Heart right ventricle (tissue), 16 donors: ENCODE measurements at regions of chr22 and their contacts with region 1.

Region 1: GRCh38 chr22:39236321-39237317 is 8.2 kb downstream of the PDGFB start:
- DNase-seq: peak; percentile 69 to 90
- ATAC-seq: peak; percentile 16 to 65 (median 45)
- H3K4me3 ChIP-seq: peak overlapping the region in 6 of 10 donors; percentile 15 to 38 (median 24)
- H3K27ac ChIP-seq: peak overlapping the region; percentile 81 to 98 (median 92)
- H3K4me1 ChIP-seq: peaks cover 35 to 98% (median 94%) of the 10 kb centered on the region in 9 donors
- H3K27me3 ChIP-seq: peaks cover 0 to 90% (median 0%) of the 10 kb centered on the region in 7 donors
- CTCF ChIP-seq: no peak

Region 2: GRCh38 chr22:39170825-39171622 is 65.6 kb before region 1 on chr22:
- intact Hi-C with region 1: loop called in 8 of 10 experiments (anchors 2 to 10 kb)
- DNase-seq: peak; percentile 83 to 89
- ATAC-seq: peak; percentile 70 to 86 (median 82)
- H3K4me3 ChIP-seq: peak overlapping the region in 3 of 10 donors; percentile 10 to 23 (median 18)
- H3K27ac ChIP-seq: peak overlapping the region in 6 of 10 donors; percentile 0 to 92 (median 27)
- H3K4me1 ChIP-seq: peaks cover 32 to 57% (median 53%) of the 10 kb centered on the region in 9 donors
- H3K27me3 ChIP-seq: no peaks in the 10 kb centered on the region
- CTCF ChIP-seq: peak; percentile 93 to 97 (median 96)

Region 3: DNA sequence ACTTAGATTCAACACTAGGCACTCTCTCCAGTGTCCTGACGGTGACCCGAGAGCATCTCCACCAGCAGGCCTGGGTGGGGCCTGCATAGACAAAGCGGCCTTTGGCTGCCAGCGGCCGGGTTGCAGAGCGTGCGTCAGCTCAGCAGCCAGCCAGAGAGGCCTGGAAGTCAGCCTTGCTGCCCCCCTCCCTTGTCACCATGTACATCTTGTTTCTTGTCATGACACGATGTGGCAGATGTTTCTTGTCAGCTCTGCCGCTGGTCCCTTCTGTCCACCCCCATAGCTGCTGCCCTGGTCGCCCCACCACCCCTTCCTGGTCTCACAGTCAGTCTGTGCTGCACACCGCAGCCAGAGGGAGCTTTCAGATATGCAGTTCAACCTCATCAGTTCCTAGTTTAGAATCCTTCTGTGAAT is 51.0 kb before region 1 on chr22:
- intact Hi-C with region 1: loop called in 1 of 10 experiments (anchors 5 kb)
- DNase-seq: peak; percentile 76 to 80
- ATAC-seq: peak; percentile 79 to 95 (median 94)
- H3K4me3 ChIP-seq: no peak overlapping the region
- H3K27ac ChIP-seq: peak overlapping the region; percentile 78 to 92 (median 82)
- H3K4me1 ChIP-seq: peaks cover 11 to 28% (median 27%) of the 10 kb centered on the region in 9 donors
- H3K27me3 ChIP-seq: no peaks in the 10 kb centered on the region
- CTCF ChIP-seq: peak in 8 of 9 donors; percentile 30 to 74 (median 56)

Region 4: GRCh38 chr22:39300186-39300830 is 63.7 kb after region 1 on chr22:
- intact Hi-C with region 1: loop called in 5 of 10 experiments (anchors 5 to 10 kb)
- DNase-seq: peak; percentile 36 to 58
- ATAC-seq: peak; percentile 52 to 79 (median 63)
- H3K4me3 ChIP-seq: peak overlapping the region in 9 of 10 donors; percentile 10 to 36 (median 16)
- H3K27ac ChIP-seq: peak overlapping the region; percentile 32 to 87 (median 78)
- H3K4me1 ChIP-seq: peaks cover 11 to 54% (median 50%) of the 10 kb centered on the region in 9 donors
- H3K27me3 ChIP-seq: no peaks in the 10 kb centered on the region
- CTCF ChIP-seq: peak in 3 of 9 donors; percentile 5 to 36 (median 31)

Region 5: DNA sequence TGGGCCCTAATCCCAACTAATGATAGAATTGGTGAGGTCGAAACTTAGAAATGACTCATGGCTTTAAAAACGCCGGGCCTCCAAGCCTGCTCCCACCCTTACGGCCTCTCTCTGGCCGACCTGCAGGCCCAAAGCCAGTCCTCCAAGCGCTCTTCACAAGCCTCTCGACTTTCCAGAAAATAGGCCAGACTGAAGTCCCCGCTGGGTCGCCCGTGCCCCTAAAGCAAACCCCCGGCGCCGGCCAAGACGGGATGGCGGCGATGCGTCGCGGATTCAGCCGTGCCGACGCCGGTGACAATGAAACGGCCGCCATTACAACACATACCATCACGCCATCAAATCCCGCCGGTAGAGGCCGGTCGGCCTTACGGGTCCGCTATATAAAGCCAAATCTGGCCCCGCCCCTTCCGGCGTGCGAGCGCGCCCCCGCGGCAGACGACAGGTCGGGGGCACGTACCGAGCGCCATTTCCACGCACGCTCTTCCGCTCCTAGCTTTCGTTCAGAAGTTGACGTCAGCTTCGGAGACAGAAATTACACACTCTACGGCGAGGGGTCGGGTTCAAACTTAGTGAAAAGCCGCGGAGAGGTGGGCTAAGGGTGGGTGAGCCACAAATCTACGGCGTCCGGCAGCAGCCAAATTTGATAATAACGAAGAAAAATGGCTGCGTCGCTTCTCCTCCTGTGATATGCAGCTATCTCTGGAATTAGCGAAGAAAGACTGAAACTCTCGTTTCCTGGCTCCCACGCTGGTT is 82.8 kb after region 1 on chr22 and contains the start of gene RPL3:
- intact Hi-C with region 1: loop called in 4 of 10 experiments (anchors 5 kb)
- DNase-seq: peak; percentile 97 to 98
- ATAC-seq: peak; percentile 87 to 95 (median 93)
- H3K4me3 ChIP-seq: peak within 1 kb of the TSS; percentile 59 to 83 (median 76)
- H3K27ac ChIP-seq: peak within 1 kb of the TSS; percentile 91 to 99 (median 98)
- H3K4me1 ChIP-seq: peaks cover 32 to 52% (median 47%) of the 10 kb centered on the region in 9 donors
- H3K27me3 ChIP-seq: no peaks in the 10 kb centered on the region
- CTCF ChIP-seq: peak in 7 of 9 donors; percentile 12 to 45 (median 29)
- total RNA-seq, gene RPL3: 215 to 604 (median 286) TPM

Region 6: GRCh38 chr22:40055143-40055883 is 818.7 kb after region 1 on chr22:
- intact Hi-C with region 1: no loop called
- DNase-seq: no peak
- ATAC-seq: peak in 1 of 8 donors; percentile 10
- H3K4me3 ChIP-seq: no peak overlapping the region
- H3K27ac ChIP-seq: peak overlapping the region in 1 of 10 donors; percentile 34
- H3K4me1 ChIP-seq: peaks cover 0 to 60% (median 35%) of the 10 kb centered on the region in 9 donors
- H3K27me3 ChIP-seq: no peaks in the 10 kb centered on the region
- CTCF ChIP-seq: no peak